ENCODE measurements at regions of chr12 and their contacts with region 1.

Region 1: GRCh38 chr12:125065021-125065795 is at the start of gene AACS:
- DNase-seq: no peak
- H3K4me3 ChIP-seq: peak within 1 kb of the TSS; percentile 75 to 93 (median 87)
- H3K27ac ChIP-seq: peak within 1 kb of the TSS; percentile 78 to 85 (median 80)
- H3K4me1 ChIP-seq: peaks cover 14 to 34% (median 28%) of the 10 kb centered on the region in 4 donors
- H3K27me3 ChIP-seq: no peaks in the 10 kb centered on the region
- CTCF ChIP-seq: no peak
- EP300 ChIP-seq: no peak
- POLR2A ChIP-seq: no peak
- total RNA-seq, gene AACS: 10.2 to 16.7 (median 13.9) TPM

Region 2: DNA sequence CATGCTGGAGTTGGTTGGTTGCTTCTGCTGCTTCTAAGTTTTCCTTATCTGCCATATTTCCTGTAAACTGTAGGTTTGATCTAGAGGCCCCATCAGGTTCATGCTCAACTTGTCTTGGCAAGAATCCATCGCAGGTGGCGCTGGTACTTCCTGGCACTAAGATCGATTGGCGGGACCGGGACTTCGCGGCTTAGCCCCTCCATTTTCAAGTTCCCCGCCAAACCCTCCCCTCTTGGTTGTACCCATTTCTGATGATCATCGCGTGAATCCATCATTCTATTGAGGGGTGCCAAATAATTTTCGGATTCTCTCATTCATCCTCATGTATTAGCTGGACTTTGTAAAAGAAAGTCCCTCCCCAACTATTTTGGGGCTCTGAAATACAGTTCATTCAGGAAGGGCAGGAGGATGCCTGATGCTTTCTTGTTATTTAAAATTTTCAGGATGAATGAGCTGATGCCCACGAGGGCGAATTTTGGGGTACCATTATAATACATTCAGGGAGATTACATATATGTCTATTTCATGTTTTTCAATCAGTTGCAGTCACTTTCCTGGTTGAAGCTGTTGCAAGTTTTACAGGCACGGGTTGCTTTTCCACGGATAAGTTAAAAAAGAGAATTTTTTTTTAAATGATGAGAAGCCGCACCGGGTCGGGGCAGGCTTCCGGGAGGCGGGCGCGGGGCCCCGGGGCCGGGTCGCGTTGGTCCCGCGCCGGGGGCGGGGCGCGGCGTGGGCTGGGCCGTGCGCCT is 72.2 kb before region 1 on chr12:
- intact Hi-C with region 1: loop called (anchors 5 kb)
- DNase-seq: no peak
- H3K4me3 ChIP-seq: peak overlapping the region; percentile 64 to 84 (median 69)
- H3K27ac ChIP-seq: no peak overlapping the region
- H3K4me1 ChIP-seq: peaks cover 15 to 38% (median 27%) of the 10 kb centered on the region in 4 donors
- H3K27me3 ChIP-seq: no peaks in the 10 kb centered on the region
- CTCF ChIP-seq: no peak
- EP300 ChIP-seq: no peak
- POLR2A ChIP-seq: no peak

Region 3: DNA sequence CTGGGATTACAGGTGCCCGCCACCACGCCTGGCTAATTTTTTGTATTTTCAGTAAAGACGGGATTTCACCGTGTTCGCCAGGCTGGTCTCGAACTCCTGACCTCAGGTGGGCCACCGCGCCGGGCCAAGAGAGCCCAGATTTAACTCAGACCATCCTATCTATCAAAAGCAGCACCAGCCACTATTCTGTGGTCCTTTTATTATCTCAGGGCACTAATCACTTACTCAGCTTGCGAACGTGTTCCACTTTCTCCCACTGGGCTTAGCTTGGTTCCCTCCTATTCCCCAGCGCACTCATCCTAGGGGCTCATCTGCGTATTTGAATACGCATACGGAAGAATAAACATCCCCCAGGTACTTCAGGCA is 16.1 kb before region 1 on chr12:
- intact Hi-C with region 1: loop called (anchors 1 kb)
- DNase-seq: no peak
- H3K4me3 ChIP-seq: peak overlapping the region; percentile 57 to 77 (median 62)
- H3K27ac ChIP-seq: peak overlapping the region in 3 of 4 donors; percentile 52 to 59 (median 52)
- H3K4me1 ChIP-seq: peaks cover 6 to 14% (median 12%) of the 10 kb centered on the region in 4 donors
- H3K27me3 ChIP-seq: no peaks in the 10 kb centered on the region
- CTCF ChIP-seq: no peak
- EP300 ChIP-seq: no peak
- POLR2A ChIP-seq: no peak

Region 4: DNA sequence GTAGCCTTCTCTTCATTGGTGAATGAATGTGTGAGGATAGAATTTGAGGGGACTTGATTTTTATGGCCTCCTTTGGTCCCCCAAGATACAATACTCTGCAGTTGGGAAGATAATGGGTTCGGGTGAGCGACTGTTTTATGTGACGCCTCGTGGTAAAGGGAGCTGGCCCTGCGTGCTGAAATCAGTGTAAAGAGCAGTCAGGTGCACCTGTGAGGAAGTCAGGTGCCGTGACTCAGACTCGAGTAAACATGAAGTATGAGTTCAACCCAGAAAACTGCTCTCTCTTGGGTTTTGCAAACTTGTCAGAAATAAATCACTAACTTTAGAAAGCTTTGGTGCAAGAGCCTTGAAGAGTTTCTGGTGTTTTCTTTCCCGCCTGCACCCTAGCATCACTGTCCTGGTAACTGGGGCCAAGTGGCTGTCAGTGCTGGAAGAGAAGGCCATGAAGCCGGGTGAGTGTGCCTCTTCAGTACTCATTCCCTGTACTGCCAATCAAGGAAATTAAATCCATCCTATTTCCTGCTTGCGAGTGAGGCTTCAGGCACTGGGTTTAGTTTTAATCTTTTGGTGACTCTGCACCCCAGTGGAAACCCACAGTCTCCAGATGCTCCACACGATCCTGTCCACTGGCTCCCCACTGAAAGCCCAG is 59.2 kb after region 1 on chr12:
- intact Hi-C with region 1: no loop called
- DNase-seq: no peak
- H3K4me3 ChIP-seq: no peak overlapping the region
- H3K27ac ChIP-seq: no peak overlapping the region
- H3K4me1 ChIP-seq: no peaks in the 10 kb centered on the region
- H3K27me3 ChIP-seq: no peaks in the 10 kb centered on the region
- CTCF ChIP-seq: no peak
- EP300 ChIP-seq: no peak
- POLR2A ChIP-seq: no peak

Region 5: DNA sequence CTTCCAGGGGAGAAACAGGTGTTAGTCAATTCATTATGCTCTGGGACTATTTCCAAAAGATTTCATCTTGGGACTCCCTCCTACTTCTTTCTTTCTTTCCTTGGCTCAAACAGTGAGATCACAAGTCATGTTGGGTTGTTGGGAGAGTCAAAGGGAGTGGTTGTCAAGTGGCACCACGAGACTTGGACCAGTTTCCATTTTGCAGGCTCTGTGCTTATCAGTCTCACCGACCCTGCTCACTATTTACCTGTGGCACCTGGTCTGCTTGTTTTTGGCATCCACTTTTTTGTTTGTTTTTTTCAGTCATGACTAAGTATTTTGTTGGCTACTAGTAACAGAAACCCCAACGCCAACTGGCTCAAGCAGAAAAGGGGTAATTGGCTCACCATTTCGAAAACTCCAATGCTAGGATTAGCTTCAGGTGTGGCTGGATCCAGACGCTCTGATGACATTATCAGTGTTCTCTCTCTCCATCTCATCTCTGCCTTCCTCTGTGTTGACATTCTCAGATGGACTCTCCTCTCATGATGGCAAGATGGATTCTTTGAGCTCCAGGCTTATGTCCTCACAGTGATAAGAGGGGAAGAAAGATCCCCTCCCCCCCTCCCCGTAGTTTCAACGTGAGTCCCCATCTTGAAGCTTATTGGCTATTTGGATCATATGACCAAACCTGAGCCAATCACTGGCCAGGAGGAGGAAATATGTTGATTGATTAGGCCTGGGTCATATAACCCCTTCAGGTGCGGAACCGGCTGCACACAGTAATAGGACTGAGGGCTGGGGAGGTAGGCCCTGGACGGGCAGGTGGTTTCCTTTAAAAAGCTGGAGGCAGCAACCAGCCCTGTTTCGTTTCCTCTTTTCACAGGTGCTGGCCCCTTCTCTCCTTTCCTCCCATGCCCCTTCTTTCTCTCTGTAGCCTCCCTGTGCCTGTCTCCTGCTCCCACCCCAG is 84.2 kb after region 1 on chr12:
- intact Hi-C with region 1: no loop called
- DNase-seq: no peak
- H3K4me3 ChIP-seq: no peak overlapping the region
- H3K27ac ChIP-seq: no peak overlapping the region
- H3K4me1 ChIP-seq: no peaks in the 10 kb centered on the region
- H3K27me3 ChIP-seq: no peaks in the 10 kb centered on the region
- CTCF ChIP-seq: no peak
- EP300 ChIP-seq: no peak
- POLR2A ChIP-seq: no peak